ENCODE measurements at regions of chr1 and their contacts with region 1.

Region 1: DNA sequence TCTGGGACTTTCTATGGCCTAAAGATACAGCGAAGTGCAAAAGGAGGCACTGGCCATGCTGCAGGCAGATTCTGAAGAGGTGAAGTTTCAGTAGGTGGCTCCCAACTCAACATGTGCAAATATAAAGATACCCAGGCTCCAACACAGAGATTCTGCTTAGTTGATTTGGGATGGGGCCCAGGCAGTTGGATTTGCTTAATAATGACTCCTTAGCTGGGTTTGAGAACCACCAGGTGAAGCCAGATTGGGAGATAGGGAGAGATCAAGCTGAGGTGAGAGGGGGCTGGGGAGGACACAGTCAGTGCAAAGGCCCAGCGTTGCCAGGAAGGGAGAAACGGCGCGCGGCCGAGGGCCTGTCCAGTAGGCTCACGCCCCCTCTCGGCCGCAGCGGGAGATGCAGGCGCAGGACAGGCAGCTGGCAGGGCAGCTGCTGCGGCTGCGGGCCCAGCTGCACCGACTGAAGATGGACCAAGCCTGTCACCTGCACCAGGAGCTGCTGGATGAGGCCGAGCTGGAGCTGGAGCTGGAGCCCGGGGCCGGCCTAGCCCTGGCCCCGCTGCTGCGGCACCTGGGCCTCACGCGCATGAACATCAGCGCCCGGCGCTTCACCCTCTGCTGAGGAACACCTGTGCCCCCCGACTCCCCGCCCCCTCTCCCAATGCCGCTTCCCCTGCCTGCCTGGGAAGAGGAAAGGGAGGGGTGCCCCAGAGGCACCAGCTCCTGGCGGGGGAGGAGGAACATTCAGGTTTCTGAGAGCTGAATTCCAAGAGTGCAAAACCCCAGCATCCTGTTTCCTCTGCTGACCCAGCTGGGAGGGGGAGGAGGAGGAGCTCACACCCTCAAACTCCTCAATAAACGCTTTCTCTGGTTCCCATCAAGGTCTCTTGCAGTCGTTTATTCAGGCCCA is 1.2 kb downstream of the FAM167B start:
- DNase-seq: no peak
- ATAC-seq: peak; percentile 69
- H3K4me3 ChIP-seq: peak overlapping the region; percentile 10; the same call in 1 of the 2 replicates
- H3K27ac ChIP-seq: peak overlapping the region; percentile 89
- H3K4me1 ChIP-seq: peaks cover 52% of the 10 kb centered on the region
- H3K27me3 ChIP-seq: no peaks in the 10 kb centered on the region
- CTCF ChIP-seq: peak; percentile 89 to 99 (median 96)
- EP300 ChIP-seq: no peak
- POLR2A ChIP-seq: peak; percentile 31; the same call in 1 of the 2 replicates
- RAD21 ChIP-seq: peak; percentile 64

Region 2: GRCh38 chr1:31745096-31745945 is 502.9 kb before region 1 on chr1:
- CTCF ChIA-PET with region 1: no interaction called
- POLR2A ChIA-PET with region 1: no interaction called
- RAD21 ChIA-PET with region 1: no interaction called
- SMC1A ChIA-PET with region 1: no interaction called
- in situ Hi-C with region 1: no loop called
- intact Hi-C with region 1: no loop called
- DNase-seq: no peak
- ATAC-seq: peak; percentile 92
- H3K4me3 ChIP-seq: no peak overlapping the region
- H3K27ac ChIP-seq: no peak overlapping the region
- H3K4me1 ChIP-seq: peaks cover 17% of the 10 kb centered on the region
- H3K27me3 ChIP-seq: no peaks in the 10 kb centered on the region; a peak in 1 of 4 replicates
- CTCF ChIP-seq: peak; percentile 69 to 87 (median 81)
- EP300 ChIP-seq: no peak
- POLR2A ChIP-seq: no peak
- RAD21 ChIP-seq: peak; percentile 71

Region 3: GRCh38 chr1:32200226-32201010 is 47.8 kb before region 1 on chr1 and contains the start of gene CCDC28B:
- CTCF ChIA-PET with region 1: interaction called, 10 read pairs
- POLR2A ChIA-PET with region 1: interaction called, 5 read pairs
- RAD21 ChIA-PET with region 1: interaction called, 4 read pairs
- SMC1A ChIA-PET with region 1: interaction called, 9 read pairs
- in situ Hi-C with region 1: no loop called
- intact Hi-C with region 1: no loop called
- DNase-seq: peak; percentile 34
- ATAC-seq: peak; percentile 66
- H3K4me3 ChIP-seq: peak within 1 kb of the TSS; percentile 90
- H3K27ac ChIP-seq: peak within 1 kb of the TSS; percentile 89
- H3K4me1 ChIP-seq: peaks cover 16% of the 10 kb centered on the region
- H3K27me3 ChIP-seq: no peaks in the 10 kb centered on the region
- CTCF ChIP-seq: no peak
- EP300 ChIP-seq: peak in 1 of 2 experiments; percentile 20; a peak in 1 of 4 replicates
- POLR2A ChIP-seq: peak; percentile 63; the same call in 1 of the 2 replicates
- RAD21 ChIP-seq: no peak
- polyA plus RNA-seq, gene CCDC28B: 10.5 to 29.8 TPM

Region 4: DNA sequence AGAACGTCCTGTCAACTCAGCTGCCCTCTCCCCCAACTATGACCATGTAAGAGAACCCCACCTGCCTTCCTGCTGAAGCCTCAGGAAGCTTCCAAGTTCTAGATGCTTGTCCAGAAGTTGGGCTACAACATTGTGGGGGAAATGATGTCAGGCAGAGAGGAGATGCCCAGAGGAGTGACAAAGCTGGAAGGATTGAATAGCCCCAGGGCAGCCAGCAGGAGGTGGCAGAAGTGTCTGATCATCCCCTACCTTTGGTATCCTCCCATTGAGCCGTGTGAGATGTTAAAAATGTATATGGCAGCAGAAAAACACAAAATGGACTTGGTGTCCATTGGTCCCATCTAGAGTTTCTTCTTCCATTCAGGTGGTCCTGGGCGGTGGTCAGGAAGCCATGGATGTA is 19.5 kb before region 1 on chr1:
- CTCF ChIA-PET with region 1: interaction called, 46 read pairs
- POLR2A ChIA-PET with region 1: interaction called, 3 read pairs
- RAD21 ChIA-PET with region 1: interaction called, 7 read pairs
- SMC1A ChIA-PET with region 1: interaction called, 7 read pairs
- in situ Hi-C with region 1: no loop called
- intact Hi-C with region 1: no loop called
- DNase-seq: no peak
- ATAC-seq: no peak
- H3K4me3 ChIP-seq: no peak overlapping the region
- H3K27ac ChIP-seq: no peak overlapping the region
- H3K4me1 ChIP-seq: peaks cover 4% of the 10 kb centered on the region
- H3K27me3 ChIP-seq: no peaks in the 10 kb centered on the region
- CTCF ChIP-seq: no peak
- EP300 ChIP-seq: no peak
- POLR2A ChIP-seq: no peak
- RAD21 ChIP-seq: no peak

Region 5: DNA sequence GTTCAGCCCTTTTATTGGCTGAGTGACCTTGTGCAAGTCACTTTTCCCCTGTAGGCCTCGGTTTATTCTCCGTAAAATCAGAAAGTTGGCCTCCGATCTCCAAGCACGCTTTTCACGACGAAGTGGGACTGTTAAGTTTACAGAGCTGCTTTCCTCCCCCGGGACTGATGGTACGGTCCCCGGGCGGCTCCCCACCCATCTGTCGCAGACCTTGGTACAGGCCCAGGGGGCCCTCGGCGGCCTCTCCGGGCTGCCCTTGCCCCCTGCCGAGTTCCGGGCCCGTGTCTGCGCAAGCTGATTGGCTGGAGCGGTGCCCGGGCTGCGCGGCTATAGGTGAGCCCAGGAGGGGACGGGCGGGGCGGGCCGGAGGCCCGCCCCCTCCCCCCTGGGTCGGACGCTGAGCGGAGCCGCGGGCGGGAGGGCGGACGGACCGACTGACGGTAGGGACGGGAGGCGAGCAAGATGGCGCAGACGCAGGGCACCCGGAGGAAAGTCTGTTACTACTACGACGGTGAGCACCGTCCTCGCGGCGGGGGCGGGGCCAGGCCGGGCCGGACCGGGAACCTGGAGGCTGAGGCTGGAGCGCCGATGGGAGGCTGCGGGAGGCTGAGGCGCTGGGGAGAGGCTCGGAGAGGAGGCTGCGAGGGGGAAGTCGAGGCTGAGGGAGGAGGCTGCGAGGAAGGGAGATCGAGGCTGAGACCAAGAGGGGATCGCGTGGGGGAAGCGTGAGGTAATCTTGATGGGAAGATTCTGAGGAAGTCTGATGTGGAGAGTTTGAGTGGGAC is 43.7 kb after region 1 on chr1 and contains the start of gene HDAC1:
- CTCF ChIA-PET with region 1: interaction called, 14 read pairs
- POLR2A ChIA-PET with region 1: interaction called, 16 read pairs
- RAD21 ChIA-PET with region 1: interaction called, 25 read pairs
- SMC1A ChIA-PET with region 1: interaction called, 14 read pairs
- in situ Hi-C with region 1: no loop called
- intact Hi-C with region 1: no loop called
- DNase-seq: peak; percentile 83
- ATAC-seq: peak; percentile 99
- H3K4me3 ChIP-seq: peak within 1 kb of the TSS; percentile 100
- H3K27ac ChIP-seq: peak within 1 kb of the TSS; percentile 92
- H3K4me1 ChIP-seq: peaks cover 3% of the 10 kb centered on the region; the same call in 1 of the 2 replicates
- H3K27me3 ChIP-seq: no peaks in the 10 kb centered on the region
- CTCF ChIP-seq: no peak
- EP300 ChIP-seq: peak in 1 of 2 experiments; percentile 34; a peak in 1 of 4 replicates
- POLR2A ChIP-seq: peak; percentile 94
- RAD21 ChIP-seq: no peak
- polyA plus RNA-seq, gene HDAC1: 150 to 151 TPM

Region 6: GRCh38 chr1:32394141-32394889 is 146.1 kb after region 1 on chr1 and contains the start of gene BSDC1:
- CTCF ChIA-PET with region 1: interaction called, 16 read pairs
- POLR2A ChIA-PET with region 1: interaction called, 3 read pairs
- RAD21 ChIA-PET with region 1: interaction called, 3 read pairs
- SMC1A ChIA-PET with region 1: interaction called, 7 read pairs
- in situ Hi-C with region 1: no loop called
- intact Hi-C with region 1: no loop called
- DNase-seq: peak; percentile 94
- ATAC-seq: peak; percentile 97
- H3K4me3 ChIP-seq: peak within 1 kb of the TSS; percentile 78
- H3K27ac ChIP-seq: peak within 1 kb of the TSS; percentile 76
- H3K4me1 ChIP-seq: no peaks in the 10 kb centered on the region; the same call in 1 of the 2 replicates
- H3K27me3 ChIP-seq: no peaks in the 10 kb centered on the region
- CTCF ChIP-seq: no peak
- EP300 ChIP-seq: 0 out of 4 replicates have a peak, but pooled peaks of 1 of the 2 experiments have one; percentile 26
- POLR2A ChIP-seq: peak; percentile 93
- RAD21 ChIP-seq: no peak
- polyA plus RNA-seq, gene BSDC1: 3.0 to 4.9 TPM

Region 7: GRCh38 chr1:32470991-32471694 is 222.9 kb after region 1 on chr1:
- CTCF ChIA-PET with region 1: no interaction called
- POLR2A ChIA-PET with region 1: no interaction called
- RAD21 ChIA-PET with region 1: no interaction called
- SMC1A ChIA-PET with region 1: no interaction called
- in situ Hi-C with region 1: no loop called
- intact Hi-C with region 1: no loop called
- DNase-seq: no peak
- ATAC-seq: no peak
- H3K4me3 ChIP-seq: no peak overlapping the region
- H3K27ac ChIP-seq: no peak overlapping the region
- H3K4me1 ChIP-seq: no peaks in the 10 kb centered on the region
- H3K27me3 ChIP-seq: no peaks in the 10 kb centered on the region; a peak in 2 of 4 replicates
- CTCF ChIP-seq: 0 out of 6 replicates have a peak, but pooled peaks of 1 of the 3 experiments have one; percentile 6
- EP300 ChIP-seq: no peak
- POLR2A ChIP-seq: no peak
- RAD21 ChIP-seq: no peak

Measured in GM12878 (cell line).